ENCODE measurements at regions of chr1 and their contacts with region 1.

Region 1: GRCh38 chr1:33472349-33472980 is at the start of gene ZSCAN20:
- DNase-seq: peak; percentile 98
- ATAC-seq: peak; percentile 96
- H3K4me3 Mint-ChIP-seq: peak within 1 kb of the TSS; percentile 80
- H3K27ac Mint-ChIP-seq: no peak within 1 kb of the TSS
- H3K4me1 Mint-ChIP-seq: peaks cover 23% of the 10 kb centered on the region
- H3K27me3 Mint-ChIP-seq: no peaks in the 10 kb centered on the region; the same call in 1 of the 2 replicates
- CTCF ChIP-seq: no peak
- total RNA-seq, gene ZSCAN20: 3.7 to 5.4 TPM (median 4.0 TPM) in 3 replicates

Region 2: GRCh38 chr1:33181921-33182341 is 290.5 kb before region 1 on chr1 and contains the start of gene TRIM62:
- CTCF ChIA-PET with region 1: interaction called, 10 read pairs
- POLR2A ChIA-PET with region 1: no interaction called
- DNase-seq: peak; percentile 77
- ATAC-seq: peak; percentile 60
- H3K4me3 Mint-ChIP-seq: peak within 1 kb of the TSS; percentile 79
- H3K27ac Mint-ChIP-seq: peak within 1 kb of the TSS; percentile 60; the same call in 1 of the 2 replicates
- H3K4me1 Mint-ChIP-seq: peaks cover 24% of the 10 kb centered on the region
- H3K27me3 Mint-ChIP-seq: peaks cover 8% of the 10 kb centered on the region
- CTCF ChIP-seq: no peak
- total RNA-seq, gene TRIM62: 10.7 to 13.6 TPM (median 11.0 TPM) in 3 replicates

Region 3: GRCh38 chr1:33219881-33220661 is 252.4 kb before region 1 on chr1:
- CTCF ChIA-PET with region 1: interaction called, 10 read pairs
- POLR2A ChIA-PET with region 1: no interaction called
- DNase-seq: no peak
- ATAC-seq: peak; percentile 55
- H3K4me3 Mint-ChIP-seq: no peak overlapping the region
- H3K27ac Mint-ChIP-seq: no peak overlapping the region
- H3K4me1 Mint-ChIP-seq: peaks cover 6% of the 10 kb centered on the region
- H3K27me3 Mint-ChIP-seq: peaks cover 20% of the 10 kb centered on the region
- CTCF ChIP-seq: no peak

Region 4: DNA sequence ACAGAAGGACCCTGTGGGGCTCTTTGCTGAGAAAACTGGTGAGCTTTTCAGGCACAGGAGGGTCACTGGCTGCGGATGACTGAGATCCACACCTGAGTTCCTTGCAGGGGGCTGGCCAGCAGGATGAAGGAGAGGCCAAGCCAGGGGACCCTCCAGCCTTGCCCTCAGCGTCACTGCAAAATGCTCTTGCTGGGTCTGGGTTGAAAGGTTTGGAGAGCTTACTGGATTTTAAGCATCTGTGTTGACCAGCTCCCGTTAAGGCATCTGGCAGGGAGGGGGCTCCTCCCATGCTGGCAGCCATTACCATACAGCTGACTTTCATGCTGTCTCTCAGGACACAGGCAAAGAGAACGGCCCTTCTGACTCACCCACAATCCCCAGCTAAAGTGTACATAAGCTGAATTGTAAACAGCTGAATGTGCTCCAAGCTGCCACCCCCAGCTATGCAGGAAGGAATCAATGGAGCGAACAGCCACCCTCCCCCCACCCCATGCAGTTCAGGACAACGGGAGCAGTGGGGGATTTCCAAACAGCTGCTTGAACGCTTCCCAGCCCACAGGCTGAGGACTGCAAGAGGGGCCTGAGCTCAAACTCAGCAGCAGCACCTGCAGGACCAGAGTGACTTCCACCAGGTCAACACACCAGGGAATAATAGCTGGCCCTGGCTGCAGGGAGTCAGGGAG is 130.3 kb before region 1 on chr1:
- CTCF ChIA-PET with region 1: interaction called, 10 read pairs
- POLR2A ChIA-PET with region 1: no interaction called
- DNase-seq: peak; percentile 46
- ATAC-seq: peak; percentile 68
- H3K4me3 Mint-ChIP-seq: peak overlapping the region; percentile 39
- H3K27ac Mint-ChIP-seq: 0 out of 2 replicates have a peak overlapping the region, but pooled peaks have one; percentile 18
- H3K4me1 Mint-ChIP-seq: peaks cover 63% of the 10 kb centered on the region
- H3K27me3 Mint-ChIP-seq: peaks cover 81% of the 10 kb centered on the region
- CTCF ChIP-seq: no peak

Region 5: GRCh38 chr1:33367485-33368405 is 104.7 kb before region 1 on chr1:
- CTCF ChIA-PET with region 1: interaction called, 14 read pairs
- POLR2A ChIA-PET with region 1: no interaction called
- DNase-seq: peak; percentile 93
- ATAC-seq: peak; percentile 71
- H3K4me3 Mint-ChIP-seq: no peak overlapping the region
- H3K27ac Mint-ChIP-seq: no peak overlapping the region
- H3K4me1 Mint-ChIP-seq: peaks cover 35% of the 10 kb centered on the region
- H3K27me3 Mint-ChIP-seq: peaks cover 20% of the 10 kb centered on the region
- CTCF ChIP-seq: peak; percentile 90

Region 6: GRCh38 chr1:33455539-33456501 is 16.6 kb before region 1 on chr1:
- CTCF ChIA-PET with region 1: interaction called, 19 read pairs
- POLR2A ChIA-PET with region 1: no interaction called
- DNase-seq: peak; percentile 52
- ATAC-seq: peak; percentile 93
- H3K4me3 Mint-ChIP-seq: no peak overlapping the region
- H3K27ac Mint-ChIP-seq: no peak overlapping the region
- H3K4me1 Mint-ChIP-seq: peaks cover 12% of the 10 kb centered on the region
- H3K27me3 Mint-ChIP-seq: peaks cover 14% of the 10 kb centered on the region; the same call in 1 of the 2 replicates
- CTCF ChIP-seq: no peak

Region 7: GRCh38 chr1:33616773-33617172 is 144.3 kb after region 1 on chr1:
- CTCF ChIA-PET with region 1: interaction called, 15 read pairs
- POLR2A ChIA-PET with region 1: no interaction called
- DNase-seq: no peak
- ATAC-seq: no peak
- H3K4me3 Mint-ChIP-seq: no peak overlapping the region
- H3K27ac Mint-ChIP-seq: no peak overlapping the region
- H3K4me1 Mint-ChIP-seq: no peaks in the 10 kb centered on the region
- H3K27me3 Mint-ChIP-seq: peaks cover 5% of the 10 kb centered on the region
- CTCF ChIP-seq: no peak

Region 8: DNA sequence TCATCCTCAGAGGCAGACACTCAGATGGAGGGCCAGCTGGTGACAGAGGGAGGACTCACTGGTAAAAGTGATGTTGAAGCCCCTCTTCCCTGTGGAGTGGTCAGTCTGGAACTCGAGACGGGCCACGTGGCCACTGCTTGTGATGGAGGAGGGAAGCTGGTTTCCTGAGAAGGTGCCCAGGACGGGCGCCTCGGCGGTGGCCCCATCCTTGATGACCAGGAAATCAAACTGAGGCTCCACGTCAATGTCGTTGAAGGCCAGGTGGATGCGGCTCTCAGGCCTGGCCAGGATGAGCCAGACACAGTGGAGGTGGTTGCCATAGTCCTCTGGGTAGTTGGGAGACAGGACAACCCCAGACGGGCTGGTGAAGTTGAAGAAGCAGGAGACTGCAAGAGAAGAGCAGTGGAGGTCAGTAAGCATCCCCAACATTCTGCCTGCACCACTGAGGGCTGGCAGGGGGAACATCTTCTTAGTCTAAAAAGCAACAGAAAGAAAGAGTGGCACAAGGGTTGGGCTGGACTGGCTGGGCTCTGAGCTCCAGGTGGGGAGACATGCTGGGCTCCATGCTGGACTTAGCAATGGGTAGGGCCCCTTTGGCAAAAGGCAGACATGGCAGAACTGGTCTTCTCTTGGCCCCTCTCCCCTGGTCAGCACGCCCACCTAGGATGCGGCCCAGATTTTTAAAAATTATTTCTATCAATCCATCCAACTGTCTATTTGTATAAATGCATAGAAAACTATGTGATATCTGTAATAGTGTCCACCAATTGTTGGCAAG is 270.9 kb after region 1 on chr1:
- CTCF ChIA-PET with region 1: no interaction called
- POLR2A ChIA-PET with region 1: no interaction called
- DNase-seq: no peak
- ATAC-seq: no peak
- H3K4me3 Mint-ChIP-seq: no peak overlapping the region
- H3K27ac Mint-ChIP-seq: no peak overlapping the region
- H3K4me1 Mint-ChIP-seq: peaks cover 7% of the 10 kb centered on the region
- H3K27me3 Mint-ChIP-seq: no peaks in the 10 kb centered on the region
- CTCF ChIP-seq: no peak